Activated CD4-positive, alpha-beta memory T cell treated with anti-CD3 and anti-CD28 coated beads for 36 hours (primary cell): ENCODE measurements at regions of chr3 and their contacts with region 1.

Region 1: DNA sequence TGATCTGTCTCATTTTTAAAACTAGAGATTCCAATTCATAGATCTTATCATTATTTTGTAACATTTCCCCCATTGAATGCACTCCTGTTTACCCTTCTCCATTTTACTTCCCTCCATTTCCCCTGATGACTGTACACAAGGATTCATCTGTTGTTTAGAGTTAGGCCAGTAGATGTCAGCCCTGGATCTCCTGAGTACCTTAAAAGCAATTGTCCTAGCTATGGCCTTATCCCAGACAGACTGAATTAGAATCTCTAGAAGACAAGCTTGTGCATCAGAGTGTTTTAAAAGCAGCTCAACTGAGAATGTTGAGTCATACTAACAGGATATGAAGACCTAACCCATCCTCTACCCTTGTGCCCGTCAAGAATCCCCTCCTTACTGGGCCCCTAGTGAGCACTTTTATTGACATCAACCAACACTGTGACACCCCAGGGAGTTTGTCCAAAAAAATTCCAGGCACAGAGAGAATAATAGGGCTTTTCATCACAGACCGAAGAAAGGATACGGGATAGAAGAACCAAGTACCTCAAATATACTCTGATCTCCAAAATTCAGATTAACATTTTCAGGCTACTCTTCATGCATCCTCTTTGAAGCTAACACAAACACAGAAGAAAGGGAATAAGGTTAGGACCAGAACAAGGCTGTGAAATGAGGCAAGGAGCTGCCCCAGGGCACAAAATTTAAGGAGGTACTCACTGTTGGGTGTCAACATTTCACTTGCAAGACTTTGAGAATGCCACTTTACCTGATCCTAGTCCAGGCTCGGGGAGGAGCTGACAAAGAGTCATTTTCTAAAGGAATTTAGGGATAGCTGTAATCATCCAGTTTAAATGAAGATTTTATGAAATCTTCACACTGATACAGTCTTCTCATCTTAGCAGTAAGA is 17.1 kb downstream of the ZBED2 start:
- DNase-seq: no peak
- H3K4me3 Mint-ChIP-seq: peak overlapping the region; percentile 35
- H3K27ac Mint-ChIP-seq: peak overlapping the region; percentile 83
- H3K4me1 Mint-ChIP-seq: peaks cover 73% of the 10 kb centered on the region
- H3K27me3 Mint-ChIP-seq: no peaks in the 10 kb centered on the region

Region 2: DNA sequence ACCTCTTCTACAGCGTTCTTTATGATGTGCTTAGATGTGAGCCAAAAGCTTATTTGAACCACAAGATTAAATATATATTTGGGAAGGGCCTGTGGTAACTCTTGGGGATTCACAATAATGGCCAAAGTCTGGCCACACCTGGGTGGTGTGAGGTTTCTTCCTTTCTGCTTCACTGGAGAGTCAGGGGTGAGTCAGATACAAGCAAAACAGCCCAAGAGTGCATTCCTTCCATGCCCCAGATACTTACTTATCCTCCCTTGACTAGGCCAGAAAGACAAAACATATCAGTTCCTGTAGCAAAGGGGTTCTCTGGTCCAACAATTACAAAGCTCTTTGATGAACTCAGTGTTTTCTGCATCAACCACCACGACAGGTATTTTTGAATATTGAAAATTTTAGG is 16.2 kb after region 1 on chr3:
- CTCF ChIA-PET with region 1: interaction called, 23 read pairs
- POLR2A ChIA-PET with region 1: interaction called, 15 read pairs
- intact Hi-C with region 1: loop called (anchors 1 kb)
- DNase-seq: no peak
- H3K4me3 Mint-ChIP-seq: peak overlapping the region; percentile 86
- H3K27ac Mint-ChIP-seq: peak overlapping the region; percentile 97
- H3K4me1 Mint-ChIP-seq: peaks cover 57% of the 10 kb centered on the region
- H3K27me3 Mint-ChIP-seq: peaks cover 2% of the 10 kb centered on the region

Region 3: GRCh38 chr3:111604119-111604518 is 26.1 kb after region 1 on chr3:
- CTCF ChIA-PET with region 1: interaction called, 22 read pairs
- POLR2A ChIA-PET with region 1: no interaction called
- intact Hi-C with region 1: loop called (anchors 1 kb)
- DNase-seq: peak; percentile 71
- H3K4me3 Mint-ChIP-seq: peak overlapping the region; percentile 62
- H3K27ac Mint-ChIP-seq: peak overlapping the region; percentile 92
- H3K4me1 Mint-ChIP-seq: peaks cover 87% of the 10 kb centered on the region
- H3K27me3 Mint-ChIP-seq: no peaks in the 10 kb centered on the region

Region 4: GRCh38 chr3:111691293-111691909 is 113.4 kb after region 1 on chr3:
- CTCF ChIA-PET with region 1: interaction called, 12 read pairs
- POLR2A ChIA-PET with region 1: no interaction called
- intact Hi-C with region 1: loop called (anchors 5 kb)
- DNase-seq: no peak
- H3K4me3 Mint-ChIP-seq: no peak overlapping the region
- H3K27ac Mint-ChIP-seq: no peak overlapping the region
- H3K4me1 Mint-ChIP-seq: peaks cover 38% of the 10 kb centered on the region
- H3K27me3 Mint-ChIP-seq: no peaks in the 10 kb centered on the region